Activated CD4-positive, alpha-beta memory T cell treated with anti-CD3 and anti-CD28 coated beads for 36 hours (primary cell): ENCODE measurements at regions of chr6 and their contacts with region 1.

Region 1: GRCh38 chr6:2848851-2849250 is 7.2 kb upstream of the SERPINB1 start:
- DNase-seq: peak; percentile 85
- H3K4me3 Mint-ChIP-seq: peak overlapping the region; percentile 59
- H3K27ac Mint-ChIP-seq: peak overlapping the region; percentile 81
- H3K4me1 Mint-ChIP-seq: peaks cover 53% of the 10 kb centered on the region
- H3K27me3 Mint-ChIP-seq: no peaks in the 10 kb centered on the region

Region 2: DNA sequence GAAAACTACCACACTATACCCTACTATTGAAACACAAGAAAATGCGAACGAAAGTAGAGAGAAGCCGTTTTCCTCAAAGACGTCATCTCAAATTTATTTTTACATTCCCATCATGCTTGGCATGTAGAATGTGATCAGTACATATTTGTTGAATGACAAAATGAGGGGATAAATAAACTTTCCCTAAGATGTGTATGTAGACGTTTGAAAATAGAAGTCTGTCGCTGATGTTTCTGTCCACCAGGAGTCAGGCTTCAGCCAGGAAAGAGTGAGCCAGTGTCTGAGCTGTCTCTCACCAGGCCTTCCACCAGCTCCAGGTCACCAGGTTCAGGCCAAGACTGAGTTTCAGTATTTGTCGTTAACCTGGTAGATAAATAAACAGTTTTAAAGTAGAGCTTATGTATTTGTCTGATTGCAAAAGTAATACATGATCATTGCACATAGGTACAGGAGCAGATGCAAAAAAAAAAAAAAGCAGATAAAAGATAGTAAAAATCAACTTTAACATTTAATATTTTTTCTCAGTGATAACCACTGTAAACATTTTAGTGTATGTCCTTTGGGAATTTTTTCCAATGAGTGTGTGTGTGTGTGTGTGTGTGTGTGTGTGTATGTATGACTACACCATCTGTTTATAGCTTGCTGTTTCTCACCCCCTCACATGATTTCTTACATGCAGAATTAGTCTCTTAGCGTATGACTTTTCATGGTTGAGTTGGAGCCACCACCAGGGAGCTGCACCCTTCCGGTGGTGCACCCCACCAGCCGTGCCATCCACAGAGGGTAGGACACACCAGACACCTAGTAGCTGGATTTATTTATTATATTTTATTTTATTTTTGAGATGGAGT is 57.5 kb before region 1 on chr6:
- CTCF ChIA-PET with region 1: interaction called, 31 read pairs
- POLR2A ChIA-PET with region 1: no interaction called
- intact Hi-C with region 1: no loop called
- DNase-seq: peak; percentile 82
- H3K4me3 Mint-ChIP-seq: no peak overlapping the region
- H3K27ac Mint-ChIP-seq: no peak overlapping the region
- H3K4me1 Mint-ChIP-seq: peaks cover 34% of the 10 kb centered on the region
- H3K27me3 Mint-ChIP-seq: no peaks in the 10 kb centered on the region

Region 3: GRCh38 chr6:2802521-2803060 is 46.3 kb before region 1 on chr6:
- CTCF ChIA-PET with region 1: no interaction called
- POLR2A ChIA-PET with region 1: no interaction called
- intact Hi-C with region 1: no loop called
- DNase-seq: no peak
- H3K4me3 Mint-ChIP-seq: no peak overlapping the region
- H3K27ac Mint-ChIP-seq: no peak overlapping the region
- H3K4me1 Mint-ChIP-seq: peaks cover 16% of the 10 kb centered on the region
- H3K27me3 Mint-ChIP-seq: no peaks in the 10 kb centered on the region

Region 4: GRCh38 chr6:2870056-2870674 is 21.3 kb after region 1 on chr6:
- CTCF ChIA-PET with region 1: interaction called, 19 read pairs
- POLR2A ChIA-PET with region 1: interaction called, 9 read pairs
- intact Hi-C with region 1: no loop called
- DNase-seq: no peak
- H3K4me3 Mint-ChIP-seq: no peak overlapping the region
- H3K27ac Mint-ChIP-seq: no peak overlapping the region
- H3K4me1 Mint-ChIP-seq: peaks cover 70% of the 10 kb centered on the region
- H3K27me3 Mint-ChIP-seq: no peaks in the 10 kb centered on the region

Region 5: GRCh38 chr6:2891768-2892170 is 42.9 kb after region 1 on chr6:
- CTCF ChIA-PET with region 1: interaction called, 53 read pairs
- POLR2A ChIA-PET with region 1: interaction called, 4 read pairs
- intact Hi-C with region 1: no loop called
- DNase-seq: peak; percentile 89
- H3K4me3 Mint-ChIP-seq: peak overlapping the region; percentile 68
- H3K27ac Mint-ChIP-seq: peak overlapping the region; percentile 83
- H3K4me1 Mint-ChIP-seq: peaks cover 58% of the 10 kb centered on the region
- H3K27me3 Mint-ChIP-seq: no peaks in the 10 kb centered on the region

Region 6: DNA sequence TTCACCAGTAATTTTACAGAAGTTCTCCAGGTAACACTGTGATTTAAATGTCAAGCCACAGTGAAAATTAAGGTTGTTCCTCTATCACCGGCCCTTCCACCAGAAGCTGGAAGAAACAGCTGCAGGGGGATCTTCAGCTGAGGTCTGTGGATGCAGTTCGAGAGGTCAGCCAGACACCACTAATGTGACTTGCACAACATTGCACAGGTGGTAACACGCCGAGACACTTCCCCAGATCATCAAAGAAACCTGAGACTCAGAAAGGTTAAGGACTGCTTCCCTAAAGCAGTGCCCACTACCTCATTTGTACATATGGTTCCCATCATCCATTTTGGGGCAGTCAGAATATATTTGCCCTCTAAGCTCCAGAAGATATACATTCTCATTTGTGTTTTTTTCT is 62.3 kb after region 1 on chr6:
- CTCF ChIA-PET with region 1: interaction called, 55 read pairs
- POLR2A ChIA-PET with region 1: interaction called, 6 read pairs
- intact Hi-C with region 1: loop called (anchors 1 kb)
- DNase-seq: no peak
- H3K4me3 Mint-ChIP-seq: no peak overlapping the region
- H3K27ac Mint-ChIP-seq: no peak overlapping the region
- H3K4me1 Mint-ChIP-seq: peaks cover 34% of the 10 kb centered on the region
- H3K27me3 Mint-ChIP-seq: no peaks in the 10 kb centered on the region

Region 7: DNA sequence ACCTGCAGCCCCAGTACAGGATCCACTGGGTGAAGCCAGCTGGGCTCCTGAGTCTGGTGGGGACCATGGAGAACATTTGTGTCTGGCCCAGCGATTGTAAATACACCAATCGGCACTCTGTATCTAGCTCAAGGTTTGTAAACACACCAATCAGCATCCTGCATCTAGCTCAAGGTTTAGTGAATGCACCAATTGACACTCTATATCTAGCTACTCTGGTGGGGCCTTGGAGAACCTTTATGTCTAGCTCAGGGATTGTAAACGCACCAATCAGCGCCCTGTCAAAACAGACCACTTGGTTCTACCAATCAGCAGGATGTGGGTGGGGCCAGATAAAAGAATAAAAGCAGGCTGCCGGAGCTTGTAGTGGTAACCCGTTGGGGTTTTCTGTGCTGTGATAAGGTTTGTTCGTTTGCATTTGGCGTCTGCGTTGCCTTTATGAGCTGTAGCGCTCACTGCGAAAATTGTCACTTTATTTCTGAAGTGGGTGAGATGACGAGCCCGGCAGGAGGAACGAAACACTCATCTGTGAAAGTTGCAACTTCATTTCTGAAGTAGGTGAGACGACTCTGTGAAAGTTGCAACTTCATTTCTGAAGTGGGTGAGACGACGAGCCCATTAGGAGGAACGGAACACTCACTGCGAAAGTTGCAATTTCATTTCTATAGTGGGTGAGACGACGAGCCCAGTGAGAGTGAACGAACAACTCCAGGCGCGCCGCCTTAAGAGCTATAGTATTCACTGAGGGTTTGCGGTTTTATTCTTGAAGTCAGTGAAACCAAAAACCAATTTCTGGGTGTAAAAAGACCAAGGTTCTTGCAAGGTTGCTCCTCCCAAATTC is 91.4 kb after region 1 on chr6:
- CTCF ChIA-PET with region 1: interaction called, 28 read pairs
- POLR2A ChIA-PET with region 1: interaction called, 13 read pairs
- intact Hi-C with region 1: loop called (anchors 1 kb)
- DNase-seq: peak; percentile 92
- H3K4me3 Mint-ChIP-seq: peak overlapping the region; percentile 54
- H3K27ac Mint-ChIP-seq: peak overlapping the region; percentile 99
- H3K4me1 Mint-ChIP-seq: peaks cover 67% of the 10 kb centered on the region
- H3K27me3 Mint-ChIP-seq: peaks cover 1% of the 10 kb centered on the region

Region 8: GRCh38 chr6:3052481-3053230 is 203.8 kb after region 1 on chr6:
- CTCF ChIA-PET with region 1: interaction called, 5 read pairs
- POLR2A ChIA-PET with region 1: no interaction called
- intact Hi-C with region 1: loop called (anchors 2 kb)
- DNase-seq: no peak
- H3K4me3 Mint-ChIP-seq: peak overlapping the region; percentile 70
- H3K27ac Mint-ChIP-seq: no peak overlapping the region
- H3K4me1 Mint-ChIP-seq: peaks cover 10% of the 10 kb centered on the region
- H3K27me3 Mint-ChIP-seq: no peaks in the 10 kb centered on the region

Region 9: DNA sequence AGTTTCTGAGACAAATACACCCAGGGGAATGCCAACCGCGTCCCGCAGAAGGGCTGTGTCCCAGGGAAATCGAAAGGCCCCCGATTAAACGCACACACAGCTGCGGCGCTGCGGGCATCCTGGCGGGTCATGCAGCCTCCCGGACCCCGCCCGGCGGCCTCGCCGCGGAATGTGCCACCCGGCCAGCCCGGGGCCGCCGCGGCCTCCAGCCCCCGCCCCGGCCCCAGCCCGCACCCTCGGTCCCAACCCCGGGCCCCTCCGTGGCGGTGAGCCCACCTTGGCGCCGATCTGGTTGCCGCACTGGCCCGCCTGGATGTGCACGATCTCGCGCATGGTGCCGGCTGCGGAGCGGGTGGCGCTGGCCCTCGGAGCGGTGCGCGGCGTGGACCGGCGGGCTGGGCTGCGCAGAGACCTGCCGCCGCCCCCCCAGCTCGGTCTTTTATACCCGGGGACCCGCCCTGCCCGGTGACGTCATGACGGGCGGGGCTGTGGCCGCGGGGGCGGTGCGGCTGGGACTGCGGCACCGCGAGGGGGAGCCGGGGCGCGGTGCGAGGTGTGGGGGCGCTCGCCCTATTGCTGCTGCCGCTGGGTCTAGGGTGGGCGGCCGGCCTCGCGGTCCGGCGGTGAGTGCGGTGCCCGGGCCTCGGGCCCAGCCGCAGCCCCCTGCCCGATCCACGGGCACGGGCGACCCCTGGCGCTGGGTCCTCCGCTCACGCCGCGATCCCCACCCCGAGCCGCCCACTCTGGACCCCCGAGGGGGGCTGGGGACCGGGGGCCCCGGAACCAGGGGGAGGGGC is 308.5 kb after region 1 on chr6 and contains the start of gene TUBB2A:
- CTCF ChIA-PET with region 1: no interaction called
- POLR2A ChIA-PET with region 1: no interaction called
- intact Hi-C with region 1: no loop called
- DNase-seq: peak; percentile 84
- H3K4me3 Mint-ChIP-seq: peak within 1 kb of the TSS; percentile 80
- H3K27ac Mint-ChIP-seq: peak within 1 kb of the TSS; percentile 50
- H3K4me1 Mint-ChIP-seq: peaks cover 23% of the 10 kb centered on the region
- H3K27me3 Mint-ChIP-seq: peaks cover 7% of the 10 kb centered on the region
- total RNA-seq, gene TUBB2A: 4.2 to 4.6 TPM